Mammary epithelial cell (primary cell): ENCODE measurements at regions of chr5 and their contacts with region 1.

Region 1: GRCh38 chr5:136053336-136054141 is 24.8 kb downstream of the TGFBI start:
- DNase-seq: peak; percentile 95
- H3K4me3 ChIP-seq: no peak overlapping the region
- H3K27ac ChIP-seq: peak overlapping the region; percentile 66
- H3K4me1 ChIP-seq: peaks cover 40% of the 10 kb centered on the region
- H3K27me3 ChIP-seq: no peaks in the 10 kb centered on the region
- CTCF ChIP-seq: no peak

Region 2: DNA sequence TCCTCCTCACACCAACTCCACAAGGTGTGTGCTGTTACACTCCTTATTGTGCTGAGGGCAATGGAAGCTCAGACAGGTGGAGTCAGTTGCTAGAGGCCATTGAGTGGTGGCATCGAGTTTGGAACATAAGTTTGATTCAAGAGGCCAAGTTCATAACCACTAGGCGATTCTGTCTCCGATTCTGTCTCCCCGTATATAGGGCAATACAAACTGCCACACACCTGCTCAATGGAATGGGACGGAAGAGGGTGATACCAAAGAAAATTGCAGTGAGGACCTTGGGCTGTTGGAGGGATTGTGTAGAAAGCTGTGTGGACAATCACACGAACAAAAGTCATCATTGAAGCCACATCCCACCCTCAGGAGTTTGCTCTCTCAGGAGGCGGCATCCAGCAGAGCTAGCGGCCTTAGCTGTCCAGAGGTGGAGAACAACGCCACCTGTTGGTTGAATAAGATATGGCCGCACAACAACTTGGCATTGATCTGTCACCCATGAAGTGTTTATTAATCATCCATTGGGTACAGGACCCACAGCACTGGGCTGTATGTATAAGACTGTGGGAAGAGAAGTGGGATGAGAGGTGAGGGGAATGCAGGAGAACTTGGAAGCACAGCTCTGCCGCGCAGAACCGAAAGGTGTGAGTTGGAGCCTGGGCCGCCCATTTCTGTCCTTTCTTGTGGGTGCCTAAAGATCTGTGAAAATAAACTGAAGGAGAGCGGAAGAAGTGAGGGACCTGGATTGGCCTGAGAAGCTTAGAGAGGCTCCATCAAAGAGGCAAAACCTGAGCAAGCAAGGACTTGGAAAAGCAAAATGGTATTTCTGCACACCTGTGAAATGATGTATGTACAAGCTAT is 501.7 kb before region 1 on chr5:
- CTCF ChIA-PET with region 1: interaction called, 34 read pairs
- dilution Hi-C with region 1: no loop called
- in situ Hi-C with region 1: no loop called
- intact Hi-C with region 1: loop called (anchors 5 kb)
- DNase-seq: peak; percentile 54
- H3K4me3 ChIP-seq: no peak overlapping the region
- H3K27ac ChIP-seq: no peak overlapping the region
- H3K4me1 ChIP-seq: no peaks in the 10 kb centered on the region
- H3K27me3 ChIP-seq: peaks cover 6% of the 10 kb centered on the region
- CTCF ChIP-seq: peak; percentile 82 to 86

Region 3: GRCh38 chr5:135950611-135951010 is 102.9 kb before region 1 on chr5:
- CTCF ChIA-PET with region 1: interaction called, 4 read pairs
- dilution Hi-C with region 1: no loop called
- in situ Hi-C with region 1: loop called in 1 of 2 experiments (anchors 5 kb)
- intact Hi-C with region 1: loop called (anchors 1 kb)
- DNase-seq: no peak
- H3K4me3 ChIP-seq: no peak overlapping the region
- H3K27ac ChIP-seq: no peak overlapping the region
- H3K4me1 ChIP-seq: no peaks in the 10 kb centered on the region
- H3K27me3 ChIP-seq: no peaks in the 10 kb centered on the region
- CTCF ChIP-seq: no peak

Region 4: GRCh38 chr5:136006761-136007251 is 46.7 kb before region 1 on chr5:
- CTCF ChIA-PET with region 1: no interaction called
- dilution Hi-C with region 1: no loop called
- in situ Hi-C with region 1: no loop called
- intact Hi-C with region 1: loop called (anchors 1 kb)
- DNase-seq: peak; percentile 96
- H3K4me3 ChIP-seq: no peak overlapping the region
- H3K27ac ChIP-seq: peak overlapping the region; percentile 82
- H3K4me1 ChIP-seq: peaks cover 50% of the 10 kb centered on the region
- H3K27me3 ChIP-seq: no peaks in the 10 kb centered on the region
- CTCF ChIP-seq: no peak

Region 5: DNA sequence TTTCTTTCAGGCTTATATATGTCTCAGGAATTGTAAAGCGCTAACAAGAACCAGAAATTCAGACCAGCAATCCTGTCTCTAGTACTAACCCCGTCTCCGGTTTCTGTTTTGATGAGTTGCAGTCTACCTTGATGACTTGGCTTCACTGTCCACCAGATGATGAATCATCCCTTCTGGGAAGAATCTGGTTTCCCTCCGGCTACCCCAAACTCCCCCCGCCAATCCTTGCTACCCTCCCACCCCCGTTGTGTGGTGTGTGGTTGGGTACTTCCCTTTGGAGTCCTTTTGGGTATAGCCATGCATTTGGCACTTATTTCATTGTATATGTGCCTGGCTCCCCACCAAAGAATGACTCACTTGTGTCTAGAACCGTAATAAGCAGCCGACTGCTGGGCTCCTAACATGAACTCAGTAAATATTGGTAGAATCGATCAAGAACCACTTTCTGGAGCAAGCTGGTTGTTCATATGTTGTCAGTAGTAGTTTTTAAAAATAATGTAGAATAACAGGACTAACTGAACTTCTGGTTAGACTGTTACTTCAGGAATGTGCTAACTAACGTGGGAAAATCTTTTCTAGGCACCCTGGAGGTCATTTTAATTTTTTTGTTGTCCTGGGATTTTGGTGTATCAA is 33.0 kb before region 1 on chr5:
- CTCF ChIA-PET with region 1: no interaction called
- dilution Hi-C with region 1: no loop called
- in situ Hi-C with region 1: no loop called
- intact Hi-C with region 1: loop called (anchors 1 kb)
- DNase-seq: peak; percentile 100
- H3K4me3 ChIP-seq: no peak overlapping the region
- H3K27ac ChIP-seq: peak overlapping the region; percentile 91
- H3K4me1 ChIP-seq: peaks cover 63% of the 10 kb centered on the region
- H3K27me3 ChIP-seq: no peaks in the 10 kb centered on the region
- CTCF ChIP-seq: no peak

Region 6: DNA sequence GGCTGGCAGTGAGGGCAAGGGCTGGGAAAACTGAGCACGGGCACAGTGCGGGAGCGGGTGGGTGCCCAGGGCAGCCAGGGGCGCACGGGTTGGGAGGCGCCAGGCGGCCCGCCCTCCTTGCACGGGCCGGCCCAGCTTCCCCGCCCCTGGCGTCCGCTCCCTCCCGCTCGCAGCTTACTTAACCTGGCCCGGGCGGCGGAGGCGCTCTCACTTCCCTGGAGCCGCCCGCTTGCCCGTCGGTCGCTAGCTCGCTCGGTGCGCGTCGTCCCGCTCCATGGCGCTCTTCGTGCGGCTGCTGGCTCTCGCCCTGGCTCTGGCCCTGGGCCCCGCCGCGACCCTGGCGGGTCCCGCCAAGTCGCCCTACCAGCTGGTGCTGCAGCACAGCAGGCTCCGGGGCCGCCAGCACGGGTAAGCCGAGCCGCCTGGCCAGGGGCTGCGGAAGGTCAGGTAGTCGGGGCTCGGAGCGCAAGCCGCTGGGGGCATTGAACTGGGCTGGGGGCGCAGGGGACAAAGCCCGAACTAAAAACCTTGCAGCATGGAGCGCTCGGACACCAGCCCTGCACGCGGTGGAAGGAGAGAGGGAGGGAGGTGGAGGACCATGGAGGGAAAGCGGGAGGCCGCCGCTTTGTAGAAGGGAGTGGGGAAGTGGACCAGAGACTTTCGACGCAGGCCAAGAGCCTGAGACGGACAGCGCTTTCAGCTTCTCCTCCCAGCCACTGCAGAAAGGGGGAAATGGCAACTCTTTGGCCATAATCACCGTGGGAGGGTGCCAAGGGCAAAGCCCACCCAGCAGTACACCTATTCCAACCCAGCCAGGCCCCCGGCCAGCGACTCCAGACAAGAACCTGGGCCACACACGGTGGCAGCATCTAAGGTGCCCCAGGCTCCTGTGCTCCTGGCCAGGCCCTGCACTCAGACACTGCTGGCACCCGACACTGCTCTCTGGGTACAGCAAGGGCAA is 24.5 kb before region 1 on chr5 and contains the start of gene TGFBI:
- CTCF ChIA-PET with region 1: no interaction called
- dilution Hi-C with region 1: no loop called
- in situ Hi-C with region 1: no loop called
- intact Hi-C with region 1: loop called (anchors 2 kb)
- DNase-seq: peak; percentile 68
- H3K4me3 ChIP-seq: peak within 1 kb of the TSS; percentile 52 to 69 (median 58)
- H3K27ac ChIP-seq: peak within 1 kb of the TSS; percentile 13
- H3K4me1 ChIP-seq: peaks cover 59% of the 10 kb centered on the region
- H3K27me3 ChIP-seq: no peaks in the 10 kb centered on the region
- CTCF ChIP-seq: peak in 1 of 2 donors; percentile 31
- total RNA-seq, gene TGFBI: 56.0 to 77.3 TPM

Region 7: GRCh38 chr5:136686192-136686872 is 632.8 kb after region 1 on chr5:
- CTCF ChIA-PET with region 1: no interaction called
- dilution Hi-C with region 1: no loop called
- in situ Hi-C with region 1: no loop called
- intact Hi-C with region 1: no loop called
- DNase-seq: peak; percentile 56
- H3K4me3 ChIP-seq: no peak overlapping the region
- H3K27ac ChIP-seq: no peak overlapping the region
- H3K4me1 ChIP-seq: no peaks in the 10 kb centered on the region
- H3K27me3 ChIP-seq: no peaks in the 10 kb centered on the region
- CTCF ChIP-seq: peak; percentile 62 to 71

Region 8: DNA sequence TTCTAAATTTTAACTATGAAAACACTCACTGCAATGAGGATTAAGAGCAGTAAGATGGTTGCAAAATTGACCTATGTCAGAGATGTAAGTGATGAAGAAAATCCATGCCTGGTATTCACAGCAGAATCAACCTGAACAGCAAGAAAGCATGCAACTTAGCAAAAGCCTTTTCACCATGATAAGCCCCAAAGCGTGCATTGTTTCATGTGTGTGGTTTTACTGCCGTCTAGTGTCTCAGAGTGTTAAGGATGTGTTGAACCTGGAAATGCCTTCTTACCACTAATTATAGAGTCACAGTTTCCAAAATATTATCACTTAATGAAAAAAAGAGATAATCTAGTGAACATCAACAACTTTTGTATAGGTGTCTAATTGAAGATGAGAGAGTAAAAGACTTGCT is 727.0 kb after region 1 on chr5:
- CTCF ChIA-PET with region 1: no interaction called
- dilution Hi-C with region 1: no loop called
- in situ Hi-C with region 1: no loop called
- intact Hi-C with region 1: no loop called
- DNase-seq: no peak
- H3K4me3 ChIP-seq: no peak overlapping the region
- H3K27ac ChIP-seq: no peak overlapping the region
- H3K4me1 ChIP-seq: no peaks in the 10 kb centered on the region
- H3K27me3 ChIP-seq: no peaks in the 10 kb centered on the region
- CTCF ChIP-seq: no peak